Tibial artery (tissue), 4 donors: ENCODE measurements at regions of chr19 and their contacts with region 1.

Region 1: DNA sequence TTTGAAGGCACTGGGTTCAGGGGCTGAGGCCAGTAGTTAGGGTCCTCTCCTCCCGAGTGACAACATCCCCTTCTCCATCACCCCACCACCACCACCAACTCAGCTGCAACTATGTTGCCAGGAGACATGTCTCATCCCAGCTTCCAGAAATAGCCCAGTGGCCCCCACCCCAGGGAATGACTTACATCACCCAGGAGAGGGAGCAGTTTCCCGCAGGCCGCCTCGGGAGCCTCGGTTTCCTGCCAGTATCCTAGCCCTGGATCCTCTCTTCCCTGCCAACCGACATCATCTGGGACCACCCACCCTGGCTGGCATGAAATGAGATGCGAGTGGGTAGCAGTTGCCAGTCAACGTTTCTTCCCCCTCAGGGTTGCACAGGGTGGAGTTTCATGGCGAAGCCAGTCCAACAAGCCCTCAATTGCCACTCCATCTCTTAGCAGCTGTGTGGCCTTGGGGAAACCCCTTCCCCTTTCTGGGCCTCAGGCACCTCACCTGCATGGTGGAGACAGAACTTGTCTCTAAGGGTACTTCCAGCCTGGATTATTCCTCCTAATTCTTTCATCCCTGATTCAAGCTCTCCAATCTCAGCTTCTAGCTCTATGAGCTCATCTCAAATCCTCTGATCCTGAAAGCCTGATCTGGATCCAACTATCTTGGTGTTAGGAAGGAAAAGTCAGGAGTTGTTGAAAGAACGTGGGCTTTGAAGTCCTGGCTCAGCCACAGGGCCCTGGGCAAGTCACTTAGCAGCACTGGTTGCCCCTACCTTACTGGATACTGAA is 3.9 kb upstream of the GSK3A start:
- DNase-seq: peak; percentile 84 to 91
- H3K4me3 ChIP-seq: no peak overlapping the region
- H3K27ac ChIP-seq: peak overlapping the region; percentile 86 to 94
- H3K4me1 ChIP-seq: peaks cover 3 to 65% (median 51%) of the 10 kb centered on the region in 4 donors
- H3K27me3 ChIP-seq: no peaks in the 10 kb centered on the region
- CTCF ChIP-seq: peak; percentile 71 to 76

Region 2: GRCh38 chr19:42279572-42280191 is 33.4 kb after region 1 on chr19:
- intact Hi-C with region 1: loop called (anchors 2 kb)
- DNase-seq: no peak
- H3K4me3 ChIP-seq: peak overlapping the region; percentile 78 to 85
- H3K27ac ChIP-seq: peak overlapping the region; percentile 93 to 97
- H3K4me1 ChIP-seq: peaks cover 6 to 85% (median 73%) of the 10 kb centered on the region in 4 donors
- H3K27me3 ChIP-seq: no peaks in the 10 kb centered on the region
- CTCF ChIP-seq: peak; percentile 89 to 91

Region 3: GRCh38 chr19:42295831-42296525 is 49.6 kb after region 1 on chr19:
- intact Hi-C with region 1: loop called (anchors 2 kb)
- DNase-seq: peak; percentile 88 to 90
- H3K4me3 ChIP-seq: no peak overlapping the region
- H3K27ac ChIP-seq: no peak overlapping the region
- H3K4me1 ChIP-seq: peaks cover 0 to 3% (median 0%) of the 10 kb centered on the region in 4 donors
- H3K27me3 ChIP-seq: no peaks in the 10 kb centered on the region
- CTCF ChIP-seq: peak; percentile 94 to 97

Region 4: GRCh38 chr19:42311657-42312056 is 65.3 kb after region 1 on chr19:
- intact Hi-C with region 1: no loop called
- DNase-seq: no peak
- H3K4me3 ChIP-seq: no peak overlapping the region
- H3K27ac ChIP-seq: no peak overlapping the region
- H3K4me1 ChIP-seq: peaks cover 0 to 17% (median 9%) of the 10 kb centered on the region in 4 donors
- H3K27me3 ChIP-seq: peaks cover 0 to 77% of the 10 kb centered on the region in 2 donors
- CTCF ChIP-seq: no peak